ENCODE measurements at regions of chr10 and their contacts with region 1.

Region 1: GRCh38 chr10:122435212-122435827 is 19.1 kb upstream of the ARMS2 start:
- DNase-seq: no peak
- ATAC-seq: no peak
- H3K4me3 Mint-ChIP-seq: no peak overlapping the region
- H3K27ac Mint-ChIP-seq: no peak overlapping the region
- H3K4me1 Mint-ChIP-seq: no peaks in the 10 kb centered on the region
- H3K27me3 Mint-ChIP-seq: peaks cover 2% of the 10 kb centered on the region

Region 2: GRCh38 chr10:122267849-122268737 is 167.2 kb before region 1 on chr10:
- CTCF ChIA-PET with region 1: interaction called, 14 read pairs
- DNase-seq: peak; percentile 61
- ATAC-seq: peak; percentile 83
- H3K4me3 Mint-ChIP-seq: no peak overlapping the region
- H3K27ac Mint-ChIP-seq: no peak overlapping the region
- H3K4me1 Mint-ChIP-seq: no peaks in the 10 kb centered on the region
- H3K27me3 Mint-ChIP-seq: peaks cover 10% of the 10 kb centered on the region

Region 3: DNA sequence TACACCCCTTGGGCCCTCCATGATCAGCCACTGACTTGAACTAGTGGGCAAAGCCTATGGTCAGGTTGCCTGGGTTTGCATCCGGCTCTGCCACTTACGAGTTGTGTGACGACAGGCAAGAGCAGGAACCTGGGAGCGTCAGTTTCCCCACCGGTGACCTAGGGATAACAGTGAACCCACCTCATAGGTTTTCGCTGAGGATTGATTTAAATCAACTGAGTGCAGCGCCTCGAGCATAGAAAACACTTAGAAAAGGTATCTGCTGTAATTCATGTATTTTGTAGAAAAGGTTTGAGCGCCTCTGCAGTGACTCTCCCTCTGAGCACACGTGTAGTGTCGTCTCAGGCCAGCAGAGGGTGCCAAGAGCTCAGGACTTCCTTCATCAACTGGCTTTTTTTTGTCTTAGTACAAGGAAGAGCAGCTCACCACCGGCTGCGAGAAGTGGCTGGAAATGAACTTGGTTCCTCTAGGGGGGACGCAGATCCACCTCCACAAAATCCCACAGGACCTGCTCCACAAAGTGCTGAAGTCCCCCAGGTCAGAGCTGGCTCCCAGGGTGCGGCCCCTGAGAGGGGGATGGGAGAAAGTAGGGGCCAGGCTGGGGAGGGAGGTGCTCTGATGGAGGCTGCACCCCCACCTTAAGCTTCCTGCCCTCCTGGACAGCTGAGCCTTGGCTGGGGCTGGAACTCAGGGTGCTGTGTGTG is 136.6 kb before region 1 on chr10:
- CTCF ChIA-PET with region 1: interaction called, 68 read pairs
- DNase-seq: peak; percentile 72
- ATAC-seq: peak; percentile 81
- H3K4me3 Mint-ChIP-seq: no peak overlapping the region
- H3K27ac Mint-ChIP-seq: no peak overlapping the region
- H3K4me1 Mint-ChIP-seq: peaks cover 12% of the 10 kb centered on the region
- H3K27me3 Mint-ChIP-seq: peaks cover 35% of the 10 kb centered on the region

Region 4: DNA sequence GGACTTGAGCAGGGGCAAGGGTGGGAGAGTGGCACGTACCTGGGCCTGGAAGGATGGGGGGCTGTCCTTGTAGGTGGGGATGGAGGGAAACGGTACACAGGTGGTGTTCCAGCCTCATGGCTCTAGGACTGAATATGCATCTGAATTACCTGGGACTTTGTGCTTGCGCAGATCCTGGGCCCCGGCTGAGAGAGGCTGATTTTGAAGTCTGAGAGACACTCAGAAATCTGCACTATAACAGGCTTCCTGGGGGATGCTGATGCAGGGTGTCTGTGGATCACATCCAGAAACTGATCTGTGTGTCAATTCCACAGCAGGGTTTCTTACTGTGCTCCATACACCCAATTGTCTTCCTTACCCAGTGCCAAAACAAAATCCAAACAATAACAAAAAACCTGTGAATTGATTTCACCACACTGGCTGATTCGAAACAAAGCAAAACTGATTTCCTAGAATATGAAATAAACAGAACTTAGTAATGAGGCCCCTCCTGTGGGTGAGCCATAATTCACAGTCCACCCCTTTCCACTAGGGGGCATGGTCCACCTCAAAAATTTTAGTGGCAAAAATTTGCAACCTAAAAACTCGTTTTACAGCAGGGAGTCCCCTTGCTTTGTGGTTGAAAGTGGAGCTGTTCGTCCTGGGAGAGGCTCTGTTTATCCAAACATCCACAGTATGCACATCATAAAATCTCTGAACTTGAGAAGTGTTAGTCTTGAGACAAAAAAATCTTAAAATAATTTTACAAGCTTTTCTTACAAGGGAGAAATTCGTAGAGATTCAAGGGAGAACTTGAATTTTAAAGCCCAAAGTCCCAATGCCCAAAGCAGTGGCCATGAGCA is 92.8 kb before region 1 on chr10:
- CTCF ChIA-PET with region 1: interaction called, 30 read pairs
- DNase-seq: peak; percentile 63
- ATAC-seq: peak; percentile 42
- H3K4me3 Mint-ChIP-seq: no peak overlapping the region
- H3K27ac Mint-ChIP-seq: no peak overlapping the region
- H3K4me1 Mint-ChIP-seq: peaks cover 4% of the 10 kb centered on the region
- H3K27me3 Mint-ChIP-seq: peaks cover 25% of the 10 kb centered on the region

Region 5: GRCh38 chr10:122374237-122374869 is 61.0 kb before region 1 on chr10 and contains the start of gene PLEKHA1:
- CTCF ChIA-PET with region 1: interaction called, 17 read pairs
- DNase-seq: peak; percentile 94
- ATAC-seq: peak; percentile 94
- H3K4me3 Mint-ChIP-seq: peak within 1 kb of the TSS; percentile 81
- H3K27ac Mint-ChIP-seq: peak within 1 kb of the TSS; percentile 65
- H3K4me1 Mint-ChIP-seq: peaks cover 22% of the 10 kb centered on the region
- H3K27me3 Mint-ChIP-seq: peaks cover 62% of the 10 kb centered on the region
- total RNA-seq, gene PLEKHA1: 5.3 to 7.2 TPM

Region 6: GRCh38 chr10:122392835-122393234 is 42.5 kb before region 1 on chr10:
- CTCF ChIA-PET with region 1: no interaction called
- DNase-seq: no peak
- ATAC-seq: no peak
- H3K4me3 Mint-ChIP-seq: no peak overlapping the region
- H3K27ac Mint-ChIP-seq: no peak overlapping the region
- H3K4me1 Mint-ChIP-seq: peaks cover 18% of the 10 kb centered on the region
- H3K27me3 Mint-ChIP-seq: peaks cover 33% of the 10 kb centered on the region

Region 7: DNA sequence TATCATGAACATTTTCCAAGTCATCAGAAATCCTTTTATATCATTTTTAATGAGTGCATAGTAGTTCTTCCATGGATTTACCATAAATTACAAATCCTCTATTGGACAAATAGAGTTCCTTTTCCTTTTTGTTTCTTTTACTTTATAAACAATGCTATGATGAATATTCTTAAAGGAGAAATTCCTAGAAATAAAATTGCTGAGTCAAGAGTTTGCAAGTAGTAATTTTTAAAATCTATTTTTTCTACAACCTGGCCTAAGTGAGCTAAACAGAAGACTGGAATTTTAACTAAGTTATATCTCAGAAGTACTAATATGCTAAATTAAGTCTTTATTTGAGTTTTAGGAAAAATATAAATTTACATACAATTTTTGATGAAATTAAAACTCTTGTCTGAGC is 22.0 kb before region 1 on chr10:
- CTCF ChIA-PET with region 1: interaction called, 13 read pairs
- DNase-seq: no peak
- ATAC-seq: no peak
- H3K4me3 Mint-ChIP-seq: no peak overlapping the region
- H3K27ac Mint-ChIP-seq: no peak overlapping the region
- H3K4me1 Mint-ChIP-seq: peaks cover 16% of the 10 kb centered on the region
- H3K27me3 Mint-ChIP-seq: no peaks in the 10 kb centered on the region

Region 8: GRCh38 chr10:122490786-122491680 is 55.7 kb after region 1 on chr10:
- CTCF ChIA-PET with region 1: no interaction called
- DNase-seq: peak; percentile 84
- ATAC-seq: peak; percentile 93
- H3K4me3 Mint-ChIP-seq: no peak overlapping the region
- H3K27ac Mint-ChIP-seq: no peak overlapping the region
- H3K4me1 Mint-ChIP-seq: peaks cover 23% of the 10 kb centered on the region
- H3K27me3 Mint-ChIP-seq: peaks cover 53% of the 10 kb centered on the region

Measured in activated CD8-positive, alpha-beta memory T cell treated with anti-CD3 and anti-CD28 coated beads, Interleukin-2, amount 10 ng/mL, durations not matched to agents 7 days and 5 days (primary cell).